ENCODE measurements at regions of chr10 and their contacts with region 1.

Region 1: DNA sequence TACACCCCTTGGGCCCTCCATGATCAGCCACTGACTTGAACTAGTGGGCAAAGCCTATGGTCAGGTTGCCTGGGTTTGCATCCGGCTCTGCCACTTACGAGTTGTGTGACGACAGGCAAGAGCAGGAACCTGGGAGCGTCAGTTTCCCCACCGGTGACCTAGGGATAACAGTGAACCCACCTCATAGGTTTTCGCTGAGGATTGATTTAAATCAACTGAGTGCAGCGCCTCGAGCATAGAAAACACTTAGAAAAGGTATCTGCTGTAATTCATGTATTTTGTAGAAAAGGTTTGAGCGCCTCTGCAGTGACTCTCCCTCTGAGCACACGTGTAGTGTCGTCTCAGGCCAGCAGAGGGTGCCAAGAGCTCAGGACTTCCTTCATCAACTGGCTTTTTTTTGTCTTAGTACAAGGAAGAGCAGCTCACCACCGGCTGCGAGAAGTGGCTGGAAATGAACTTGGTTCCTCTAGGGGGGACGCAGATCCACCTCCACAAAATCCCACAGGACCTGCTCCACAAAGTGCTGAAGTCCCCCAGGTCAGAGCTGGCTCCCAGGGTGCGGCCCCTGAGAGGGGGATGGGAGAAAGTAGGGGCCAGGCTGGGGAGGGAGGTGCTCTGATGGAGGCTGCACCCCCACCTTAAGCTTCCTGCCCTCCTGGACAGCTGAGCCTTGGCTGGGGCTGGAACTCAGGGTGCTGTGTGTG is 27.7 kb downstream of the BTBD16 start:
- DNase-seq: peak; percentile 60
- H3K4me3 ChIP-seq: peak overlapping the region in 1 of 3 experiments; percentile 4
- H3K27ac ChIP-seq: no peak overlapping the region
- H3K4me1 ChIP-seq: peaks cover 16% of the 10 kb centered on the region
- H3K27me3 ChIP-seq: no peaks in the 10 kb centered on the region
- CTCF ChIP-seq: peak; percentile 92 to 98

Region 2: DNA sequence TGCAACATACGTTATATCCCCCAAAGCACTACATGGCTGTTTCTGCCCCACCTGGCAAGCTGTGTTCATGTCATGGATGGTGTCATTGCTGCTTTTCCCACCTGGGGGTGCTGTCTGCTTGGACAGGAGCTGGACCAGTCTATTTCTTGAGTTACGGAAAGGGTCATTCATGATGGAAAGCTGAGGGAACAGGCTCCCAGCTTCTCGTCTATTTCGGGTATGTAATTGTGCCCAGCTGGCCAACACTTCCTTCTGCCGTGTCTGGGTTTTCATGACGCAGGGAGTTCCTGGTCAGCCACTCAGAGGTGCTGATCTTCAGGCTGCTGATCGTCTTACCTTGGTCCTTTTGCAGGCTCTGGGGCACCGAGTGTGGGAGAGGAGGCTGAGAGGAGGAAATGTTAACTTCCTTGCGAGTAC is 19.0 kb before region 1 on chr10:
- CTCF ChIA-PET with region 1: interaction called, 19 read pairs
- dilution Hi-C with region 1: no loop called
- in situ Hi-C with region 1: no loop called
- intact Hi-C with region 1: loop called (anchors 1 kb)
- DNase-seq: peak; percentile 46
- H3K4me3 ChIP-seq: no peak overlapping the region
- H3K27ac ChIP-seq: no peak overlapping the region
- H3K4me1 ChIP-seq: peaks cover 16% of the 10 kb centered on the region
- H3K27me3 ChIP-seq: no peaks in the 10 kb centered on the region
- CTCF ChIP-seq: peak; percentile 83 to 93

Measured in mammary epithelial cell (primary cell).